ENCODE measurements at regions of chr18 and their contacts with region 1.

Region 1: DNA sequence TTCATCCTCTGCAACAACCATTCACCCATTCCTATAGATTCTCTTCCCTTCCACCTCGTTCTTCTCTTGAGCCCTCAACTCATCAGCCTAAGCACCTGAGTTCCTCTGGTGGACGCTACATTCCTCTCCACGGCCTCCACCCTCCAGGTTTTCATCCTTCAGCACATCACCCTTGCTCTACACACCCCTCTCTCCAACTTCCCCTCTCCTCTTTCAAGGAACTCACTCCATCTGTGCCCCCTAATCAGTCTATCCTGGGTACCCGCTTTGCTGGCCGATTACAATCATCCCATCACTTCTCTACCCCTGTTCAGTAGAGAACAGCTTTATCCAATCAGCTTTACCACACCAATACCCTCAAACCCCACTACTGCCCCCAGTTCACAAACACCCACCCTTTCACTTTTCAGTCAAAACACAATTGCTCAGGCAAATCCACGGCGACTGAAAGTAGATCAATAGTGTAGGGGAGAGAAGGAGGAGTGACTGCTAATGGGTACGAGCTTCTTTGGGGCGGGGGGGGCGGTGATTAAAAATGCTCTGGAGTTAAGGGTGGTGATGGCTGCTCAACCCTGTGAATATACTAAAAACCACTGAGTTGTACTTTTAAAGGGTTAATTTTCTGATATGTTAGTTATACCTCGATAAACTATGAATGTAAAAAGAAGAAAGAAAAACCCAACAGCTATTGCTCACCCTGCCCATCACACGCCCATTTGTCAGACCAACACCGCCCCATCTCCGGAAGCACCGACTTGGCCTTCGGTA is 857 bp downstream of the DYM start:
- DNase-seq: peak; percentile 59
- ATAC-seq: peak; percentile 43
- H3K4me3 Mint-ChIP-seq: peak overlapping the region; percentile 82
- H3K27ac Mint-ChIP-seq: peak overlapping the region; percentile 69
- H3K4me1 Mint-ChIP-seq: peaks cover 36% of the 10 kb centered on the region
- H3K27me3 Mint-ChIP-seq: no peaks in the 10 kb centered on the region

Region 2: DNA sequence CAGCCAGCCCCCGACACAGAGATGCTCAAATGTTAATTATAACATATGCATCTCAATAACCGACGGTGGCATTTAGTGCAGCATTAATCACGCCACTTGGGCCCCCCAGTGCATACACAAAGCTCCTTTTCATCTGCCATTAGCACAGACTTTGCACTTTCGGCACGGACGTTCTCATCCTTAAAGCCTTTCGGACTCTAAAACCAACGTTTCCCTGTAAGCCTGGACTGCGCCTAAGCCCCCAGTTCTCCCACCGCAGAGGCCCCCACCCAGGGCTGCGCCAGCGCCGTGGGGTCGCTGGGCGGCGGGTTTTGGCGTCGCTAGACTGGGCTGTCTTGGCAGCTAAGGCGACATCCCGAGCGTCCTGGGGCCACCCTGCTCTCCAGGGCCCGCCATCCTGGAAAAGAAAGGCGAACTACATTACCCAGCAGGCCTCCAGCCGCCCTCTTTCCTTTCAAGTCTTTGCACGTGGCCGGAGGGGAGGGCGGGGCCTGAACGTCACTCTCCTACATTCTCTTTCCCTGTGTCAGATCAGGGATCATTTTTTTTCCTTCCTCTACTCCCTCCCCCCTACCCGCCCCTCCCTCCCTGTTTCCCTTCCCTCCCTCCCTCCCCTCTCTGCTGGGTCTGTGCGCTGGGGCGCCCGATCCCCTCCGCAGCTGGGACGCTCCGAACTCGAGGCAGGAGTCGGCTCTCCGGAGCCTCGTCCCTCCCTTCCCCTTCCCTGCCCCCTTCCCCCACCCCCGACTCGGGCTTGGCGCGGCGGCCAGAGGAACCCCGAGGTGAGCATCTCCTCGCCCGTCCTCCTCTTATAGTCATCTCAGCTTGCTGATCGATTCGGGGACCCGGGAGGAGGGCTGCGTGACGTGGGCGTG is 920.8 kb before region 1 on chr18 and contains the start of gene CTIF:
- CTCF ChIA-PET with region 1: no interaction called
- POLR2A ChIA-PET with region 1: no interaction called
- intact Hi-C with region 1: loop called in 1 of 2 experiments (anchors 1 kb)
- DNase-seq: peak; percentile 86
- ATAC-seq: peak; percentile 86
- H3K4me3 Mint-ChIP-seq: peak within 1 kb of the TSS; percentile 78
- H3K27ac Mint-ChIP-seq: no peak within 1 kb of the TSS
- H3K4me1 Mint-ChIP-seq: peaks cover 15% of the 10 kb centered on the region
- H3K27me3 Mint-ChIP-seq: peaks cover 8% of the 10 kb centered on the region
- total RNA-seq, gene CTIF: 4.5 to 5.3 TPM

Region 3: DNA sequence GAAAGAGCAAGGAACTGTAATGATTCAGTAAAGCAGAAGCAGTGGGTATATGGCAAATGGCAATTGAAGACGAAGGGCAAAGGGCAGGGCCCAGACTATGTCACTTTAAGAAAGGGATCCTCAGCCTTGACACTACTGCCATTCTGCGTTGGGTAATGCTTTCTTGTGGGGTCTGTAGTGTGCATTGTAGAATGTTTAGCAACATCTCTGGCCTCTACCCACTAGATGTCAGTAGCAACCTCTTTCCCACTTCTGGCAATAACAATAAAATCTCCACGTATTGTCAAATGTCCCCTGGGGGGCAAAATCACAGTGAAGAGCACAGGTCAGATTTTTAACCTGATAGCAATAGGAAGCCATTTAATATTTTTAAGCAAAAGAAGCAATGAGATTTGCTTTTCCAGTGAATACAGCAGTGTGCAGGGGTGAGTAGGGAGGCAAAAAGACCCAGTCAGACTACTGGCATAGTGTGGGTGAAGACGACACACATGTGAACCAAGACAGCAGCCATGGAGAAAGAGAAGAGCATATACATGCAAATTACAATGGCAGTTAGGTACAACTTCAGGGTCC is 208.7 kb before region 1 on chr18:
- CTCF ChIA-PET with region 1: no interaction called
- POLR2A ChIA-PET with region 1: no interaction called
- intact Hi-C with region 1: loop called in 1 of 2 experiments (anchors 10 kb)
- DNase-seq: peak; percentile 35
- ATAC-seq: no peak
- H3K4me3 Mint-ChIP-seq: no peak overlapping the region
- H3K27ac Mint-ChIP-seq: no peak overlapping the region
- H3K4me1 Mint-ChIP-seq: no peaks in the 10 kb centered on the region
- H3K27me3 Mint-ChIP-seq: no peaks in the 10 kb centered on the region

Region 4: GRCh38 chr18:49486953-49487710 is 27.5 kb after region 1 on chr18 and contains the start of gene C18orf32:
- CTCF ChIA-PET with region 1: interaction called, 4 read pairs
- POLR2A ChIA-PET with region 1: interaction called, 11 read pairs
- intact Hi-C with region 1: loop called (anchors 1 kb)
- DNase-seq: peak; percentile 96
- ATAC-seq: peak; percentile 92
- H3K4me3 Mint-ChIP-seq: peak within 1 kb of the TSS; percentile 95
- H3K27ac Mint-ChIP-seq: peak within 1 kb of the TSS; percentile 100
- H3K4me1 Mint-ChIP-seq: peaks cover 60% of the 10 kb centered on the region
- H3K27me3 Mint-ChIP-seq: no peaks in the 10 kb centered on the region
- total RNA-seq, gene C18orf32: 12.7 to 20.0 TPM